GM12878 (cell line): ENCODE measurements at regions of chr11 and their contacts with region 1.

Region 1: GRCh38 chr11:7513234-7514098 is at the start of gene PPFIBP2:
- DNase-seq: no peak
- ATAC-seq: peak; percentile 80
- H3K4me3 ChIP-seq: peak within 1 kb of the TSS; percentile 92
- H3K27ac ChIP-seq: peak within 1 kb of the TSS; percentile 99
- H3K4me1 ChIP-seq: peaks cover 22% of the 10 kb centered on the region
- H3K27me3 ChIP-seq: no peaks in the 10 kb centered on the region
- CTCF ChIP-seq: peak; percentile 73 to 91 (median 81)
- EP300 ChIP-seq: peak; percentile 19 to 30; a peak in 3 of 4 replicates
- POLR2A ChIP-seq: peak; percentile 84
- RAD21 ChIP-seq: peak; percentile 90
- polyA plus RNA-seq, gene PPFIBP2: 17.3 to 22.3 TPM

Region 2: GRCh38 chr11:5684646-5685362 is 1828.7 kb before region 1 on chr11 and contains the start of gene TRIM5:
- CTCF ChIA-PET with region 1: no interaction called
- POLR2A ChIA-PET with region 1: no interaction called
- RAD21 ChIA-PET with region 1: no interaction called
- SMC1A ChIA-PET with region 1: no interaction called
- in situ Hi-C with region 1: loop called (anchors 25 kb)
- intact Hi-C with region 1: no loop called
- DNase-seq: peak; percentile 86
- ATAC-seq: peak; percentile 87
- H3K4me3 ChIP-seq: peak within 1 kb of the TSS; percentile 87
- H3K27ac ChIP-seq: peak within 1 kb of the TSS; percentile 94
- H3K4me1 ChIP-seq: peaks cover 8% of the 10 kb centered on the region
- H3K27me3 ChIP-seq: no peaks in the 10 kb centered on the region
- CTCF ChIP-seq: peak; percentile 74 to 78 (median 76)
- EP300 ChIP-seq: peak in 1 of 2 experiments; percentile 15; a peak in 1 of 4 replicates
- POLR2A ChIP-seq: peak; percentile 60; the same call in 1 of the 2 replicates
- RAD21 ChIP-seq: peak; percentile 80
- polyA plus RNA-seq, gene TRIM5: 20.0 to 21.8 TPM

Region 3: DNA sequence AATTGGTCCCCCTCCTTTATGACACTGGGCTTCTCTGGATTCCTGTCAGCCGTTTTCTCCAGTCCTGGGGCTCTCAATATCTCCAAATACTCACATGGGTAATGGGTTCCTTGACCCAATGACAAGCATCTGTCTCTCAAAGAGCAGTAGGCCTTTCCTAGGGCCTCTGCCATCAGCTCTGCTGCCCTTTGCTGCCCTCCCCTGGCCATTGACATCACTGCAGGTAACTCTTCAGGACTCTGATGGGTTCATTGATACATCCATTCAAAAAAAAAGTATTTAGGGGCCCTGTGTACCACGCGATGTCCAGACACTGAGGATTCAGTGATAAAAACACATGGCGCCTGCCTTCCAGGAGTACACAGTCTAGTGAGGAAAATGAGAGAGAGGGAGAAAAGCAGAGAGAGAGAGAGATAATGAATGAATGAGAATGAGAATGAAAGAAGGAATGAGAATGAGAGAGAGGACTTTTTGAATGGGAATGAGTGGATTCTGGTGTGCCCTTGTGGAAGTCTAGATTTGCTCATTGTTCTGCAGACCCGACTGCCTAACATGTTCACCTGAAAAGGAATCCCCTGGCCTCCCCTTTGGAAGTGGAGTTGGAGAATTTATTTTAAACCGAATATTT is 70.8 kb before region 1 on chr11:
- CTCF ChIA-PET with region 1: interaction called, 11 read pairs
- POLR2A ChIA-PET with region 1: no interaction called
- RAD21 ChIA-PET with region 1: interaction called, 7 read pairs
- SMC1A ChIA-PET with region 1: interaction called, 6 read pairs
- in situ Hi-C with region 1: no loop called
- intact Hi-C with region 1: no loop called
- DNase-seq: peak; percentile 30
- ATAC-seq: peak; percentile 98
- H3K4me3 ChIP-seq: no peak overlapping the region
- H3K27ac ChIP-seq: no peak overlapping the region
- H3K4me1 ChIP-seq: no peaks in the 10 kb centered on the region
- H3K27me3 ChIP-seq: no peaks in the 10 kb centered on the region
- CTCF ChIP-seq: peak; percentile 86 to 92 (median 90)
- EP300 ChIP-seq: no peak
- POLR2A ChIP-seq: no peak
- RAD21 ChIP-seq: peak; percentile 98

Region 4: DNA sequence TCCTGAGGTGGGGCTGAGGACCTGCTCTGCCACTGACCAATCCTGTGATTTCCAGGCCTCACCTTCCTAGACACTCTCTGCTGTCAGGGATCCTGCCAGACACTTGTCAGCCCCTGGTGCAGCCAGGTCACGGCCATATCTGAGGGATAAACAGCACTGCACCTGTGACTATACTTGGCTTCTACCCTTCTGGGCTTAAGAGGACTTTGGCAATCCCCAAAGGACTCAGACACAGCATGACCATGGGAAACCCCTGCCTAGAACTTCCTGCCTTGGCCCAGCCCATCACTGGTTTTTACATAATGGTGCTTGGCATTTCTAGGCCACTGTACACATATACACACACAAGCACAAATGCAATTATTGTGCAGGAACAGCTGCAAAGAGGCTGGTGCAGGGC is 39.7 kb before region 1 on chr11:
- CTCF ChIA-PET with region 1: interaction called, 4 read pairs
- POLR2A ChIA-PET with region 1: interaction called, 9 read pairs
- RAD21 ChIA-PET with region 1: interaction called, 19 read pairs
- SMC1A ChIA-PET with region 1: interaction called, 14 read pairs
- in situ Hi-C with region 1: no loop called
- intact Hi-C with region 1: no loop called
- DNase-seq: peak; percentile 40
- ATAC-seq: peak; percentile 98
- H3K4me3 ChIP-seq: no peak overlapping the region
- H3K27ac ChIP-seq: peak overlapping the region; percentile 18; the same call in 1 of the 2 replicates
- H3K4me1 ChIP-seq: peaks cover 10% of the 10 kb centered on the region
- H3K27me3 ChIP-seq: no peaks in the 10 kb centered on the region
- CTCF ChIP-seq: no peak
- EP300 ChIP-seq: no peak
- POLR2A ChIP-seq: no peak
- RAD21 ChIP-seq: no peak

Region 5: DNA sequence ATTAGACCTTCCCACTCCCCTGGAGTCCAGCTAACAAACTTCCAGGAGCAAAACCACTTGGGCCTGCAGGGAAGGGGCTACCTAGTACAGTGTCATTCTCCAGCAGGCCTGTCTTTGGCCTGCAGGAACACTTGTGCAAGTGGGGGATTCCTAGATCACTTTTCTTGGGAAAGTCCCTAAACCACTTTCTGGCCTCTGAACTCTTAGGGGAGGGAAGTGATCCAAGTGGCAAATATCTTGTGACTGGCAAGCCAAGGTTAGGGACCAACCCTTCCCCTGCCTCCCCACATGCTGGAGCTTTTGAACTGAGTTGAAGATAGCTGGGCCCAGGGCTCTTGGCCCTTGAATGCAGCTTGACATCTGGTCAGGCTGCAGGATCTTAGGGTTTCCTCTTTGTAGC is 17.5 kb after region 1 on chr11:
- CTCF ChIA-PET with region 1: interaction called, 67 read pairs
- POLR2A ChIA-PET with region 1: interaction called, 8 read pairs
- RAD21 ChIA-PET with region 1: interaction called, 6 read pairs
- SMC1A ChIA-PET with region 1: interaction called, 69 read pairs
- in situ Hi-C with region 1: no loop called
- intact Hi-C with region 1: no loop called
- DNase-seq: no peak
- ATAC-seq: peak; percentile 62
- H3K4me3 ChIP-seq: no peak overlapping the region
- H3K27ac ChIP-seq: peak overlapping the region; percentile 51
- H3K4me1 ChIP-seq: peaks cover 92% of the 10 kb centered on the region
- H3K27me3 ChIP-seq: no peaks in the 10 kb centered on the region
- CTCF ChIP-seq: no peak
- EP300 ChIP-seq: no peak
- POLR2A ChIP-seq: no peak
- RAD21 ChIP-seq: no peak

Region 6: GRCh38 chr11:7555052-7555699 is 41.7 kb after region 1 on chr11:
- CTCF ChIA-PET with region 1: interaction called, 28 read pairs
- POLR2A ChIA-PET with region 1: interaction called, 3 read pairs
- RAD21 ChIA-PET with region 1: interaction called, 46 read pairs
- SMC1A ChIA-PET with region 1: interaction called, 60 read pairs
- in situ Hi-C with region 1: no loop called
- intact Hi-C with region 1: no loop called
- DNase-seq: no peak
- ATAC-seq: no peak
- H3K4me3 ChIP-seq: no peak overlapping the region
- H3K27ac ChIP-seq: no peak overlapping the region
- H3K4me1 ChIP-seq: peaks cover 16% of the 10 kb centered on the region
- H3K27me3 ChIP-seq: no peaks in the 10 kb centered on the region
- CTCF ChIP-seq: no peak
- EP300 ChIP-seq: no peak
- POLR2A ChIP-seq: no peak
- RAD21 ChIP-seq: no peak

Region 7: DNA sequence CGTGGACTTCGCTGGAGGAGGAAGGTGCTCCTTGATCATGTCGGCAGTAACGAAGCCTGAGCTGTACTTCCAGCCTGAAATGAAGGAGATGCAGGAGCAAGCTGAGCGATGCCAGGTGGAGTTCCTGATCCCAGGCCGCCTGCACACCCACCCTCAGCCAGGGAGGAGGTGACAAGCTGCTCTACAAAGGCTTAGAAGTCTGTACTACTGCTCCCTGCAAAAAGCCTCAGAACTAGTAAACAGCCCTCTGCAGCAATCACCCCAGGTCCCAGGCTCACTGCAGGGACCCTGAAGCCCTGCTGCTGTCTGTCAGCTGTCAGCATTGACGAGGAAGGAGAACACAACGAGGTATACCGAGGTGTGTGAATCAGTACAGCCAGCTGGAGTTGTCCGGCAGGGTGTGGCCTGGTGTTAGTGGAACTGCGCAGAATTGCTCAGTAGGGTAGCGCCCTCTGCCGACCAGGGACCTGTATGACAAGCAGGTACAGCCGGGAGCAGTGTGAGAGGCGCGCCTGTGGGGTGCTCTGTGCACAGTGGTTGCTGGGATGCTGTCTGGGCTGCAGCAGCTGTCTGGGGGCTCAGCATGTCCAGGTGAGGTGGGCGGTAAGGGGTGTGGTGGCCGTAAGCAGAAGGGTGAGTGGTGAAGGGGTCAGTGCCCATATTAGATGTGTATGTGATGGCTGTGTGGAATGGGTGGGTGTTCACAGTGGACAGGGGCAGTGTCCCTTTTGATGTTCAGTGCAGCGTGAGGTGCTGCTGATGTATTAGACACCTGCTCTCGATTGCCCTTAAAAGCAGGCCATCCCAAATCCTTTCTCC is 152.2 kb after region 1 on chr11:
- CTCF ChIA-PET with region 1: interaction called, 61 read pairs
- POLR2A ChIA-PET with region 1: interaction called, 3 read pairs
- RAD21 ChIA-PET with region 1: interaction called, 18 read pairs
- SMC1A ChIA-PET with region 1: interaction called, 16 read pairs
- in situ Hi-C with region 1: no loop called
- intact Hi-C with region 1: loop called (anchors 1 kb)
- DNase-seq: peak; percentile 34
- ATAC-seq: peak; percentile 100
- H3K4me3 ChIP-seq: no peak overlapping the region
- H3K27ac ChIP-seq: no peak overlapping the region
- H3K4me1 ChIP-seq: peaks cover 11% of the 10 kb centered on the region
- H3K27me3 ChIP-seq: no peaks in the 10 kb centered on the region
- CTCF ChIP-seq: peak; percentile 94 to 97 (median 96)
- EP300 ChIP-seq: no peak
- POLR2A ChIP-seq: peak; percentile 62
- RAD21 ChIP-seq: peak; percentile 86